Mammary epithelial cell (primary cell): ENCODE measurements at regions of chr3 and their contacts with region 1.

Region 1: DNA sequence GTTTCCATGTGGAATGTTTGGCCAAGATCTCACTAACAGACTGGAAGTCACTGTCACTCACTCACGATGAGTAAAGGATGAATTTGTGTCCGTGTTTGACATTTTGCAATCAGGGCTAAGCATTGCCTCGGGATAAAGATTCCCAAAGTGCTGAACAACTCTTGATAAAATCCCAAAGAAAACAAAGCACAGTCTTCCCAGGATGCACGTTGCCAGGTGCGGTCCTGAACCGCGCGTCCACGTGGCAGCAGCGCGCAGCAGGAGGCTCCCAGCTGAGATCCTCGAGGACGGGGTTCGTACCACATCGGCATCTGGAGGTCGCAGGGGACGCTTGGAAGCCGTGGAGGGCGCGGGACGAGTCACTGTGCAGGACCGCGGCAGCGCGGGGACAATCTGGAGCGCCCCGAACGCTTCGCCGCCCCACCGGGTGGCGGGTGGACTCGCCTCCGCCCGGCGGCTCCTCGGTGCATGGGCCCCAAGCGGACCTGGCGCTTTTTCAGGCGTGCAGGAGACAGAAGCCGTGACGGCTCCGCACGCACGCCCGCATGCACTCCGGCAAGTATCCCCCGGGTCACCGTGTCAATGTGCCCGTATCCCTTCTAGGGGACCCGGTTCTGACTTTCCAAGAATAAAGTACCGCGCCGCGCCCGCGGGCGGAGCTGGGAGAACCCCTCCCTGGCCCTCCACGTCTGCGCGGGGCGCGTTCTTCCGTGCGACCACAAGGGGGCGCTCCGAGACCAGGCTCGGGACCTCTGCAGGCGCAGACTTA is 17.7 kb downstream of the CPN2 start:
- DNase-seq: peak; percentile 76
- H3K4me3 ChIP-seq: peak overlapping the region; percentile 5 to 37 (median 36)
- H3K27ac ChIP-seq: peak overlapping the region; percentile 36
- H3K4me1 ChIP-seq: peaks cover 35% of the 10 kb centered on the region
- H3K27me3 ChIP-seq: no peaks in the 10 kb centered on the region
- CTCF ChIP-seq: peak; percentile 73 to 98

Region 2: GRCh38 chr3:194344012-194344411 is 10.6 kb after region 1 on chr3:
- CTCF ChIA-PET with region 1: no interaction called
- dilution Hi-C with region 1: no loop called
- in situ Hi-C with region 1: no loop called
- intact Hi-C with region 1: loop called (anchors 1 kb)
- DNase-seq: peak; percentile 32
- H3K4me3 ChIP-seq: no peak overlapping the region
- H3K27ac ChIP-seq: no peak overlapping the region
- H3K4me1 ChIP-seq: no peaks in the 10 kb centered on the region
- H3K27me3 ChIP-seq: no peaks in the 10 kb centered on the region
- CTCF ChIP-seq: peak; percentile 95 to 98

Region 3: GRCh38 chr3:194404365-194405140 is 71.2 kb after region 1 on chr3:
- CTCF ChIA-PET with region 1: no interaction called
- dilution Hi-C with region 1: no loop called
- in situ Hi-C with region 1: no loop called
- intact Hi-C with region 1: loop called (anchors 1 kb)
- DNase-seq: peak; percentile 29
- H3K4me3 ChIP-seq: no peak overlapping the region
- H3K27ac ChIP-seq: no peak overlapping the region
- H3K4me1 ChIP-seq: no peaks in the 10 kb centered on the region
- H3K27me3 ChIP-seq: no peaks in the 10 kb centered on the region
- CTCF ChIP-seq: peak; percentile 64 to 69

Region 4: DNA sequence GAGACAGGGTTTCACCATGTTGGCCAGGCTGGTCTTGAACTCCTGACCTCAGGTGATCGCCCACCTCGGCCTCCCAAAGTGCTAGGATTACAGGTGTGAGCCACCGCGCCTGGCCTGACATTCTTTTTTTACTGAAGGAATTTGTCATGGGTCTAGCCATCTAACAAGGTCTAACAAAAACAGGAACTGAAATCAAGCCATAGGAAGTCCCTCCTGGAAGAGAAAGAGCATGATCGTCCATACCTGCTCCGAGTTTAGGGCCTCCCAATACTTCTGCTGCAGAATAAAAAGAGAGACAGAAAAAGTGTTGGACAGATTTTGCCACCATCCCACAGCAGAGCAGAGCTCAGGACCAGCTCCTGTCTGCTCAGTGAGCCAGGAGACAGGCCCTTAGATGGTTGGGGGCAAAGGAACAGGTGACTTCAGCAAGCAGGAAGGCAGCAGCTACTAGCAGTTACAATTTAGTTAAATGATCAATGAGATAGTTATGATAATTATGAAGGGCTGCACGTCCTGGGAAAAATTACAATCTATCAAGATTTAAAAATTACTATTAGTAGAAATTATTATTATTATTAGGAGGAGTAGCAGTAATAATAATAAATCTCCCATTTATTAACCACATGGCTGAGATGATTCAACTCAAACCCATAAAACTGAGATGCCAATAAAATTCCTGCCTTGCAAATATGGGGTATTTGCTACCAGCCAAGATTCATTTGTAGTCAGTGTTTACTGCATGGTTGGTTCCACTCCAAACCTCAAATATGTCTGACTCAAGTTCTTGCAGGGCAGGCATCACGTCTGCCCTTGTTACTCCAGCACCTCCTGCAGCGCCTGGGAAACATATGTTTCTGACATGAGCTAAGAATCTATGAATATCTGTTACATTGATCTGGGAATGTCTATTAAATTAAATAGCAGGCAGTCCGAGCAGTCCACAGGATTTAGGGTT is 259.7 kb after region 1 on chr3:
- CTCF ChIA-PET with region 1: no interaction called
- dilution Hi-C with region 1: no loop called
- in situ Hi-C with region 1: no loop called
- intact Hi-C with region 1: loop called (anchors 1 kb)
- DNase-seq: peak; percentile 96
- H3K4me3 ChIP-seq: no peak overlapping the region
- H3K27ac ChIP-seq: no peak overlapping the region
- H3K4me1 ChIP-seq: peaks cover 13% of the 10 kb centered on the region
- H3K27me3 ChIP-seq: no peaks in the 10 kb centered on the region
- CTCF ChIP-seq: peak; percentile 18 to 47

Region 5: GRCh38 chr3:194632809-194633348 is 299.5 kb after region 1 on chr3:
- CTCF ChIA-PET with region 1: no interaction called
- dilution Hi-C with region 1: no loop called
- in situ Hi-C with region 1: no loop called
- intact Hi-C with region 1: loop called (anchors 2 kb)
- DNase-seq: peak; percentile 34
- H3K4me3 ChIP-seq: peak overlapping the region; percentile 60 to 92 (median 78)
- H3K27ac ChIP-seq: peak overlapping the region; percentile 7
- H3K4me1 ChIP-seq: peaks cover 9% of the 10 kb centered on the region
- H3K27me3 ChIP-seq: no peaks in the 10 kb centered on the region
- CTCF ChIP-seq: no peak

Region 6: GRCh38 chr3:194671900-194672808 is 338.8 kb after region 1 on chr3 and contains the start of gene LSG1:
- CTCF ChIA-PET with region 1: interaction called, 3 read pairs
- dilution Hi-C with region 1: no loop called
- in situ Hi-C with region 1: no loop called
- intact Hi-C with region 1: loop called (anchors 1 kb)
- DNase-seq: peak; percentile 90
- H3K4me3 ChIP-seq: peak within 1 kb of the TSS; percentile 57 to 96 (median 95)
- H3K27ac ChIP-seq: peak within 1 kb of the TSS; percentile 98
- H3K4me1 ChIP-seq: peaks cover 21% of the 10 kb centered on the region
- H3K27me3 ChIP-seq: no peaks in the 10 kb centered on the region
- CTCF ChIP-seq: no peak
- total RNA-seq, gene LSG1: 33.5 to 33.8 TPM